Ovary (tissue), 10 donors: ENCODE measurements at regions of chr9 and their contacts with region 1.

Region 1: GRCh38 chr9:69324549-69325401 is at the start of gene ENTREP1:
- DNase-seq: peak; percentile 61 to 80 (median 70)
- H3K4me3 ChIP-seq: peak within 1 kb of the TSS; percentile 60
- H3K27ac ChIP-seq: peak within 1 kb of the TSS; percentile 51 to 54
- H3K4me1 ChIP-seq: peaks cover 3% of the 10 kb centered on the region
- H3K27me3 ChIP-seq: no peaks in the 10 kb centered on the region
- CTCF ChIP-seq: no peak
- EP300 ChIP-seq: no peak
- POLR2A ChIP-seq: peak; percentile 15
- total RNA-seq, gene ENTREP1: 17.7 to 36.9 (median 25.4) TPM

Region 2: DNA sequence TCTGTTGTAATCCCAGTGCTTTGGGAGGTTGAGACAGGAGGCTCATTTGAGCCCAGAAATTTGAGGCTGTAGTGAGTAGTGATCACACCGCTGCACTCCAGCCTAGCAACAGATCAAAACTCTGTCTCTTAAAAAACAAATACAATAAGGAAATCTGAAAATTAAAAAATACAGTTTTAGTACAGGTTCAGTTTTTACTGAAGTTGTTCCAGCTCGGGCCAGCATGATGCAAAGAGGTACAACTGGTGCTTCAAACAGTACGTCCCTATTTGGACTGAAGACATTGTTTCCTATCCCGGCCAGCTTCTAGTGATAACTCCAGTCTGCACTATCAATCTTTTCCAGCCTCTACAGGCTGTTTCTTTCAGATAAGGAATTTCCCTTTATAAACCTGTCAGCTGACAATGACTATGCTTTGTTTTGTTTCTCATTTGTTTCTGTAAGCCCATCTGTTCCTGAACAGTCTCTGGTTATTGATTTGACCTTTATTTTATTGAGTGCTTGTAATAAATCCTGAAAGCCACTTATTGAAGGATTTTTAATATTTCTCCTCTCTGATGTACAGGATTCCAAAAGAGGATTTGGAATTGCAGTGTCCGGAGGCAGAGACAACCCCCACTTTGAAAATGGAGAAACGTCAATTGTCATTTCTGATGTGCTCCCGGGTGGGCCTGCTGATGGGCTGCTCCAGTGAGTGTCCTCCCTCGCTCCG is 108.8 kb before region 1 on chr9:
- intact Hi-C with region 1: loop called in 1 of 4 experiments (anchors 10 kb)
- DNase-seq: no peak
- H3K4me3 ChIP-seq: no peak overlapping the region
- H3K27ac ChIP-seq: peak overlapping the region; percentile 31 to 63
- H3K4me1 ChIP-seq: peaks cover 22% of the 10 kb centered on the region
- H3K27me3 ChIP-seq: no peaks in the 10 kb centered on the region
- CTCF ChIP-seq: no peak
- EP300 ChIP-seq: no peak
- POLR2A ChIP-seq: no peak

Region 3: GRCh38 chr9:70823284-70823683 is 1498.5 kb after region 1 on chr9:
- intact Hi-C with region 1: no loop called
- DNase-seq: no peak
- H3K4me3 ChIP-seq: no peak overlapping the region
- H3K27ac ChIP-seq: no peak overlapping the region
- H3K4me1 ChIP-seq: no peaks in the 10 kb centered on the region
- H3K27me3 ChIP-seq: no peaks in the 10 kb centered on the region
- CTCF ChIP-seq: no peak
- EP300 ChIP-seq: no peak
- POLR2A ChIP-seq: no peak